ENCODE measurements at regions of chr1 and their contacts with region 1.

Region 1: DNA sequence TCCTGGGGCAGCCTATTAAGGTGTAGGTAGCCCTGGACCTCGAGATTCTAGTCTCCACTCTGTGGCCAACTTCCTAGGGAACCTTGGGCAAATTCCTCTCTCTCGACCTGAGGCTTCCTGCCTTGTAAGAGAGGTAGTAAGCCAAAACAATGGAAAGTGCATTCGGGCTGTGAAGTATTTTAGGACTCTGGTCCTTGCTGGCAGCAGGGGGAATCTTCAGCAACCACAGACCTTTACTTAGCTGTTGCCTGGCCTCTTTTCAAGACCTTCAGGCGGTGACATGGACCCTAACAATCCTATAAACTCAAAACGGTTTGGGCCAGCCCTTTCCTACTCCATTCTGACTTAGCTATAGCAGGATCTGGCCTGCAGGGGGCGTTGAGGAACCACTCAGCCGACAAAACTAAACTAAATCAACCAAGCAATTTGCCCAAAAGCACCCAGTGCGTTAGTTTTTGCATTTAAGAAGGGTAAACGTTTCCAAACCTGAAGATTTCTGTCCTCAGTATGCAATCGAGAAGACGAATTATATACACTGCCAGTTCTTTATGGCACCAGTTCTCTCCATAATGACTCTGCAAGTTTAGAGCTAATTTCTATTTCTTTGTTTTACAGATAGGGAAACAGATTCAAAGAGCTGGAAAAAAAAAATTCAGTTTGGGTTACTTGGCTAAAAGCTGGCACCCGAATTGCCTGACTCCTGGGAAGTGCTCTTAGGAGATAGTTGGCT is 10.9 kb upstream of the SESN2 start:
- DNase-seq: peak; percentile 72 to 89 (median 84)
- ATAC-seq: peak; percentile 18
- H3K4me3 ChIP-seq: peak overlapping the region in 1 of 2 experiments; percentile 28
- H3K4me3 Mint-ChIP-seq: peak overlapping the region; percentile 61
- H3K27ac ChIP-seq: peak overlapping the region; percentile 65 to 94
- H3K27ac Mint-ChIP-seq: peak overlapping the region; percentile 96
- H3K4me1 ChIP-seq: peaks cover 40% of the 10 kb centered on the region
- H3K4me1 Mint-ChIP-seq: peaks cover 44% of the 10 kb centered on the region
- H3K27me3 ChIP-seq: no peaks in the 10 kb centered on the region
- H3K27me3 Mint-ChIP-seq: no peaks in the 10 kb centered on the region
- CTCF ChIP-seq: peak; percentile 90

Region 2: DNA sequence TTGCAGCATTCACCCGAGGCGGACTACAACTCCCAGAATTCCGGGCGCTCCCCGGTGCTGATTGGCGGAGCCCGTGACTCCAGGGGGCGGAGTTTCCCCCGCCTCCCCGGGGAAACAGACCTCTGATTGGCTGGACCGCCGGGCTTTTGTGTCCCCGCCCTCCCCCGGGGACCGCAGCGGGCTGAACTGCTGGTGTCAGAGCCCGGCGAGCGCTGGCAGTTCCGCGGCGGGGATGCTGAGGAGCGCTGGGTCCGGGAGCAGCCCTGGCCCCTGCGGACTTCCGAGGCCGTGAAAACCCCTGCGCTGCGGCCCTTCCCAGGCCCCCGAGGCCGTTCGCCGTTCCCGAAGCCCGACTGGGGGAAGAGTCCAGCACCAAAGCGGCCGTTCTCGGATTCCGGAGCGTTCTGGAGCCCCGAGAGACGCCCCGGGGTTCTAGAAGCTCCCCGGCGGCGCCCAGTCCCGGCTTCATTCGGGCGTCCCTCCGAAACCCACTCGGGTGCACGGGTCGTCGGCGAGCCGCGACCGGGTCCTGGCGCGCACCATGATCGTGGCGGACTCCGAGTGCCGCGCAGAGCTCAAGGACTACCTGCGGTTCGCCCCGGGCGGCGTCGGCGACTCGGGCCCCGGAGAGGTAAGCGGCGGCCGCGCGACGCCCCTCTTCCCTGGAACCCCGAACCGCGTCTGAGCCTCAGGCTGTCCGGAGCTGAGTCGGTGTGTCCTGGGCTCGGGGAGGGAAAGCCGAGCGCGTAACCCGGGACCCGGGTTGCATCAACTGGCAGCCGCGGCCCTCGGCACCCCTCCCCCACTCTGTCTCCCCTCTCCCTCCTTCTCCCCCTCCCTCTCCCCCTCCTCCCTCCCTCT is 11.1 kb after region 1 on chr1 and contains the start of gene SESN2:
- CTCF ChIA-PET with region 1: interaction called, 25 read pairs
- POLR2A ChIA-PET with region 1: interaction called, 33 read pairs
- intact Hi-C with region 1: loop called (anchors 1 kb)
- DNase-seq: peak; percentile 98 to 99 (median 99)
- ATAC-seq: peak; percentile 97
- H3K4me3 ChIP-seq: peak within 1 kb of the TSS; percentile 86 to 87
- H3K4me3 Mint-ChIP-seq: peak within 1 kb of the TSS; percentile 85
- H3K27ac ChIP-seq: peak within 1 kb of the TSS; percentile 52 to 72
- H3K27ac Mint-ChIP-seq: peak within 1 kb of the TSS; percentile 64
- H3K4me1 ChIP-seq: peaks cover 47% of the 10 kb centered on the region
- H3K4me1 Mint-ChIP-seq: peaks cover 44% of the 10 kb centered on the region
- H3K27me3 ChIP-seq: no peaks in the 10 kb centered on the region
- H3K27me3 Mint-ChIP-seq: no peaks in the 10 kb centered on the region
- CTCF ChIP-seq: no peak
- total RNA-seq, gene SESN2: 15.0 to 15.3 TPM

Region 3: GRCh38 chr1:28329395-28330153 is 81.1 kb after region 1 on chr1:
- CTCF ChIA-PET with region 1: interaction called, 34 read pairs
- POLR2A ChIA-PET with region 1: interaction called, 21 read pairs
- intact Hi-C with region 1: loop called (anchors 1 kb)
- DNase-seq: peak in 6 of 9 experiments; percentile 18 to 72 (median 46)
- ATAC-seq: peak; percentile 20
- H3K4me3 ChIP-seq: peak overlapping the region; percentile 53 to 57
- H3K4me3 Mint-ChIP-seq: peak overlapping the region; percentile 95
- H3K27ac ChIP-seq: peak overlapping the region; percentile 84 to 86
- H3K27ac Mint-ChIP-seq: peak overlapping the region; percentile 98
- H3K4me1 ChIP-seq: peaks cover 20% of the 10 kb centered on the region
- H3K4me1 Mint-ChIP-seq: peaks cover 34% of the 10 kb centered on the region
- H3K27me3 ChIP-seq: no peaks in the 10 kb centered on the region
- H3K27me3 Mint-ChIP-seq: no peaks in the 10 kb centered on the region
- CTCF ChIP-seq: no peak

Region 4: GRCh38 chr1:28369371-28370238 is 121.2 kb after region 1 on chr1 and contains the start of gene PHACTR4:
- CTCF ChIA-PET with region 1: interaction called, 6 read pairs
- POLR2A ChIA-PET with region 1: interaction called, 3 read pairs
- intact Hi-C with region 1: loop called (anchors 1 to 2 kb)
- DNase-seq: peak; percentile 44 to 87 (median 76)
- ATAC-seq: peak; percentile 88
- H3K4me3 ChIP-seq: peak within 1 kb of the TSS; percentile 70 to 90
- H3K4me3 Mint-ChIP-seq: peak within 1 kb of the TSS; percentile 96
- H3K27ac ChIP-seq: peak within 1 kb of the TSS; percentile 67 to 83
- H3K27ac Mint-ChIP-seq: peak within 1 kb of the TSS; percentile 94
- H3K4me1 ChIP-seq: peaks cover 5% of the 10 kb centered on the region
- H3K4me1 Mint-ChIP-seq: peaks cover 34% of the 10 kb centered on the region
- H3K27me3 ChIP-seq: no peaks in the 10 kb centered on the region
- H3K27me3 Mint-ChIP-seq: no peaks in the 10 kb centered on the region
- CTCF ChIP-seq: peak; percentile 30
- total RNA-seq, gene PHACTR4: 19.3 to 25.2 TPM

Region 5: DNA sequence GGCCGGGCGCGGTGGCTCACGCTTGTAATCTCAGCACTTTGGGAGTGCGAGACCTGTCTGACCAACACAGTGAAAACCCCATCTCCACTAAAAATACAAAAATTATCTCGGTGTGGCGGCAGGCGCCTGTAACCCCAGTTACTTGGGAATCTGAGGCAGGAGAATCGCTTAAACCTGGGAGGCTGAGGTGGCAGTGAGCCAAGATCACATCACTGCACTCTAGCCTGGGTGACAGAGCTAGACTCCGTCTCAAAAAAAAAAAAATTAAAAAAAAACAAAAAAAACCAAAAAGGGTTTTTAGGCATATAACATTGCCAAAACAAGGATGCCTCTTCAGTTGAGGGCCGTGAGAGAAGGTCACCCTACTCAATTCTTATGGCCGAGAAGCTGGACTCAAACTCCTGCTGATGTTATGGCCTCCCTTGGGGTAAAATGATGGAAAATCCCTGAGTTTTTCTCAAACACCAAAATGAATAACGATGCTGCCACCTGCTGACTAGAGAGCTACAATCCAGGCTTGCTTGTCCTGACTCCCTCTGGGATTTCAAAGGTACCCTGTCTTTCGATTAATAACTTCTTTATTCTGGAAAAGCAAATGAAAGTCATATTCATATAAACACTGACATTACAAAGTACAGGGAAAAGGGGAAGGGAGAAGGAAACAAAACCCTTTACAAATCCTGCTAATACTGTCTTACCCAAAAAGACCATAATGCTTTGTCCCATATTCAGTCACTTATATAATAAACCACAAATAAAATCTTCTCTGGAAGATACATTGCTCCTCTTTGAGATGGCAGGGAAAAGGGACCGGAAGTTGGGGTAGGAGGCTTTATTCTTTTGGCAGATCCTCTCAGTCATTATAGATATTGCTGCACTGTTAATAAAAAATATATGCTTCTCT is 354.3 kb after region 1 on chr1:
- CTCF ChIA-PET with region 1: no interaction called
- POLR2A ChIA-PET with region 1: no interaction called
- intact Hi-C with region 1: loop called in 1 of 2 experiments (anchors 2 kb)
- DNase-seq: peak in 4 of 9 experiments; percentile 24 to 62 (median 46)
- ATAC-seq: no peak
- H3K4me3 ChIP-seq: no peak overlapping the region
- H3K4me3 Mint-ChIP-seq: no peak overlapping the region
- H3K27ac ChIP-seq: no peak overlapping the region
- H3K27ac Mint-ChIP-seq: no peak overlapping the region
- H3K4me1 ChIP-seq: no peaks in the 10 kb centered on the region
- H3K4me1 Mint-ChIP-seq: no peaks in the 10 kb centered on the region
- H3K27me3 ChIP-seq: no peaks in the 10 kb centered on the region
- H3K27me3 Mint-ChIP-seq: no peaks in the 10 kb centered on the region
- CTCF ChIP-seq: peak; percentile 31

Region 6: GRCh38 chr1:29312469-29313466 is 1064.3 kb after region 1 on chr1:
- CTCF ChIA-PET with region 1: no interaction called
- POLR2A ChIA-PET with region 1: no interaction called
- intact Hi-C with region 1: no loop called
- DNase-seq: no peak
- ATAC-seq: no peak
- H3K4me3 ChIP-seq: no peak overlapping the region
- H3K4me3 Mint-ChIP-seq: no peak overlapping the region
- H3K27ac ChIP-seq: no peak overlapping the region
- H3K27ac Mint-ChIP-seq: no peak overlapping the region
- H3K4me1 ChIP-seq: no peaks in the 10 kb centered on the region
- H3K4me1 Mint-ChIP-seq: no peaks in the 10 kb centered on the region
- H3K27me3 ChIP-seq: no peaks in the 10 kb centered on the region
- H3K27me3 Mint-ChIP-seq: no peaks in the 10 kb centered on the region
- CTCF ChIP-seq: no peak